PC-9 (cell line): ENCODE measurements at regions of chr14 and their contacts with region 1.

Region 1: DNA sequence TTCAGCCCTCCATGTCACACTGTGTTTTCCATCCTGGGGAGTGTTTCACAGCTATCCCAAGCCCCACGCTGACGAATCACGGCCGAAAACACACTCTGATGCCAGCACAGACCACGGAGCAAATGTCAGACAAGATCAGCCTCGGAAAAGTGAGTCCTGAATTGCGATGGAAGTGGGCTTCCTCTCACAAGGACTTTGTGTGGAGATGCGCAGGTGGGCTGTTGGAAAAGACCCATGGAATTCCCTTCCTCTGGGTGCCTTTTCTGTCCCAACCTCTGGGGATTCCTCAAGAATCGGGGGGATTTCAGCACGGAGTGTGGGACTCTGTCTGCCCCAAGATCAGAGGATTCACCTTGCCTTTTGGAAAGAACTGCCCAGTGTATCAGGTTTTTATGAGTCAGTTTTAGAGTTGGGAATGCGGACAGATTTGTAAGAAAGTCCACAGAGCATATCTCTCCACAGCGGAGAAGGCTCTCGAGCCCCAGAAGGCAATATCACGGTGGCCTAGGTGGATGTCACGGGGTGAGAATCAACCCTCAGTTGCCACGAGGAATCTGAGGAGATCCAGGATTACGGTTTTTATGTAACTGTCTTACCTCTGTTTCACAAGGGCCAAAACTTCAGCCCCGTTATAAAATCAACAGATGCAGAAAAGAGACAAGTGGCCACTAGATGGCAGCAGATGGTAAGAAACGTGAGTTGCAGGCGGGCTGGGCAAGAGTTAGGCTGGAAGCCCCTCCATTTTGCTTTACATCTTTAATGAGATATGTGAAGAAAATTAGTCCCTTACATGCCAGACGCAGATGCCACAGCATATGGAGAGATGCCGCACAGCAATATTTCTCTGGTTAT is 201.9 kb downstream of the DAD1 start:
- DNase-seq: peak in 1 of 2 experiments; percentile 37
- H3K4me3 ChIP-seq: no peak overlapping the region
- H3K27ac ChIP-seq: no peak overlapping the region
- H3K4me1 ChIP-seq: peaks cover 47% of the 10 kb centered on the region
- H3K27me3 ChIP-seq: no peaks in the 10 kb centered on the region
- CTCF ChIP-seq: peak; percentile 81

Region 2: GRCh38 chr14:22122227-22122818 is 264.8 kb before region 1 on chr14:
- CTCF ChIA-PET with region 1: interaction called, 3 read pairs
- POLR2A ChIA-PET with region 1: no interaction called
- intact Hi-C with region 1: loop called (anchors 5 kb)
- DNase-seq: no peak
- H3K4me3 ChIP-seq: no peak overlapping the region
- H3K27ac ChIP-seq: no peak overlapping the region
- H3K4me1 ChIP-seq: no peaks in the 10 kb centered on the region
- H3K27me3 ChIP-seq: no peaks in the 10 kb centered on the region
- CTCF ChIP-seq: peak; percentile 53

Region 3: GRCh38 chr14:22341049-22341448 is 46.1 kb before region 1 on chr14:
- CTCF ChIA-PET with region 1: no interaction called
- POLR2A ChIA-PET with region 1: no interaction called
- intact Hi-C with region 1: no loop called
- DNase-seq: no peak
- H3K4me3 ChIP-seq: no peak overlapping the region
- H3K27ac ChIP-seq: no peak overlapping the region
- H3K4me1 ChIP-seq: no peaks in the 10 kb centered on the region
- H3K27me3 ChIP-seq: no peaks in the 10 kb centered on the region
- CTCF ChIP-seq: no peak